Activated CD8-positive, alpha-beta memory T cell treated with anti-CD3 and anti-CD28 coated beads, Interleukin-2, amount 10 ng/mL, durations not matched to agents 7 days and 5 days (primary cell): ENCODE measurements at regions of chr15 and their contacts with region 1.

Region 1: GRCh38 chr15:44620081-44620480 is 43.4 kb downstream of the SPG11 start:
- DNase-seq: no peak
- ATAC-seq: no peak
- H3K4me3 Mint-ChIP-seq: no peak overlapping the region
- H3K27ac Mint-ChIP-seq: no peak overlapping the region
- H3K4me1 Mint-ChIP-seq: peaks cover 5% of the 10 kb centered on the region
- H3K27me3 Mint-ChIP-seq: no peaks in the 10 kb centered on the region

Region 2: DNA sequence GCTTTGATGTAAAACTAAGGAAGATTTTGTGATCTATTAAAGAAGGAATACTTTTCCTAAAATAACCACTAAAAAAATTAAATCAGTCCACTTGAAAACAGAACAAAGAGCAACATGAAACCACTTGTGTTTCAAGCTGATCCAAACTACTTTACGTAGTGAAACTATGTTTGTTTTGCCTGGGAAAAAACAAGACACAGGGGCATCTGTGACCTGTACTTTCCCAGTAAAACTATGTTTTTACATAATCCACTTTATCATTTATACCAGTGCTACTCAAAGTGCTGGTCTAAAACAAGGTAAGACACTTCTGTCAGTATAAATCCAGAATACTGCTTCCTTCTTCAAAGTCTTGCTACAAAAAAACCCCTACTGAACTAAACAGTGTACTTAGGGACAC is 13.3 kb before region 1 on chr15:
- CTCF ChIA-PET with region 1: no interaction called
- DNase-seq: no peak
- ATAC-seq: no peak
- H3K4me3 Mint-ChIP-seq: no peak overlapping the region
- H3K27ac Mint-ChIP-seq: no peak overlapping the region
- H3K4me1 Mint-ChIP-seq: no peaks in the 10 kb centered on the region
- H3K27me3 Mint-ChIP-seq: no peaks in the 10 kb centered on the region

Region 3: GRCh38 chr15:44633603-44634002 is 13.5 kb after region 1 on chr15:
- CTCF ChIA-PET with region 1: interaction called, 10 read pairs
- DNase-seq: no peak
- ATAC-seq: peak; percentile 50
- H3K4me3 Mint-ChIP-seq: no peak overlapping the region
- H3K27ac Mint-ChIP-seq: peak overlapping the region; percentile 73
- H3K4me1 Mint-ChIP-seq: peaks cover 17% of the 10 kb centered on the region
- H3K27me3 Mint-ChIP-seq: no peaks in the 10 kb centered on the region

Region 4: GRCh38 chr15:44918136-44918535 is 298.1 kb after region 1 on chr15:
- CTCF ChIA-PET with region 1: no interaction called
- DNase-seq: no peak
- ATAC-seq: no peak
- H3K4me3 Mint-ChIP-seq: no peak overlapping the region
- H3K27ac Mint-ChIP-seq: no peak overlapping the region
- H3K4me1 Mint-ChIP-seq: no peaks in the 10 kb centered on the region
- H3K27me3 Mint-ChIP-seq: peaks cover 1% of the 10 kb centered on the region